Upper lobe of right lung (tissue), 1 donor: ENCODE measurements at regions of chr2 and their contacts with region 1.

Region 1: GRCh38 chr2:191571163-191571769 is 106.7 kb upstream of the NABP1 start:
- DNase-seq: no peak
- ATAC-seq: peak; percentile 85
- H3K4me3 ChIP-seq: peak overlapping the region; percentile 32
- H3K27ac ChIP-seq: peak overlapping the region; percentile 18
- H3K4me1 ChIP-seq: peaks cover 19% of the 10 kb centered on the region
- H3K27me3 ChIP-seq: no peaks in the 10 kb centered on the region
- CTCF ChIP-seq: peak; percentile 32

Region 2: GRCh38 chr2:191202881-191203397 is 368.3 kb before region 1 on chr2:
- intact Hi-C with region 1: no loop called
- DNase-seq: no peak
- ATAC-seq: no peak
- H3K4me3 ChIP-seq: no peak overlapping the region
- H3K27ac ChIP-seq: peak overlapping the region; percentile 38
- H3K4me1 ChIP-seq: peaks cover 7% of the 10 kb centered on the region
- H3K27me3 ChIP-seq: no peaks in the 10 kb centered on the region
- CTCF ChIP-seq: no peak

Region 3: GRCh38 chr2:191521608-191522208 is 49.6 kb before region 1 on chr2:
- intact Hi-C with region 1: no loop called
- DNase-seq: no peak
- ATAC-seq: no peak
- H3K4me3 ChIP-seq: no peak overlapping the region
- H3K27ac ChIP-seq: no peak overlapping the region
- H3K4me1 ChIP-seq: no peaks in the 10 kb centered on the region
- H3K27me3 ChIP-seq: no peaks in the 10 kb centered on the region
- CTCF ChIP-seq: peak; percentile 82

Region 4: GRCh38 chr2:191677646-191678436 is 106.6 kb after region 1 on chr2 and contains the start of gene NABP1:
- intact Hi-C with region 1: loop called (anchors 5 kb)
- DNase-seq: peak; percentile 100
- ATAC-seq: peak; percentile 98
- H3K4me3 ChIP-seq: peak within 1 kb of the TSS; percentile 80
- H3K27ac ChIP-seq: peak within 1 kb of the TSS; percentile 98
- H3K4me1 ChIP-seq: peaks cover 38% of the 10 kb centered on the region
- H3K27me3 ChIP-seq: no peaks in the 10 kb centered on the region
- CTCF ChIP-seq: no peak
- total RNA-seq, gene NABP1: 50.2 TPM